ENCODE measurements at regions of chr15 and their contacts with region 1.

Region 1: GRCh38 chr15:73712088-73712487 is 27.9 kb downstream of the CD276 start:
- DNase-seq: no peak

Region 2: DNA sequence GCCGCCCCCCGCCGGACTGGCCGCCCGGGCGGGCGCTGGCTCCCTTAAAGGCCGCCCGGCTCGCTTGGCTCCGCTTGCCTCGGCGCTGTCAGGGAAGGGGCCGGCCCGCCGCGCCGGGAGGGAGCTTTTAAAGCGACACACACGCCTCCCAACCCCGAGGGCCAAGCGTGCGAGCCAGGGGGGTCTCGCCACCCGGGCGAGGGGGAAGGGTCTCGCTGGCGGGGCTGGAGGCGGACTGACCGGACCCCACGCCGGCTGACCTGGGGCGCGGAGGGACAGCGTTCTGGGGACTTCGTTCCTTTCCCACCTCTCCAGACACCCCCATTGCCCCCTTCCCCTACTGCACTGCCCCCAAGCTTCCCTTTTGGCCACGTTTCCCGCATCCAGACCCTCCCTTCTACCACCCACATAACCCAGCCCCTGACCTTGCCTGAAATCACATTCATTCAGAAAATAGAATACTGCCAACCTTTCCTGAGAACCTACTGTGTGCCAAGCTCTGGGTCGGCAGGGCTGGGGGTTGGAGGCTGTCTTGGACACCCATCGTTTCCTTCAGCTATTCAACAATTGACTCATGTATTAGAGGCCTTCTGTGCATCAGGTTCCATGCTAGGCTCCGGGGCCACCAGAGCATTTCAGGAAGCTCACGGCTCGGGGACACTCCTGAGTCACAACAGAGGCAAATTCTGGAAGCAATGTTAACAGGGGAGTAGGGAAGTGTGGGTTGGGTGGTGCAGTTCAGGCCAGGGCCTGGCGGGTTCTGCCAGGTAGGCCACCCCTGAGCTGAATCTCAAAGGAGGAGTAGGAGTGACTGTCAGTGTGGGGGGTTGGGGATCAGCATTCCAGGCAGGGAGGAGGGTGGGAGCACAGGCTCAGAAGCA is 41.4 kb after region 1 on chr15 and contains the start of gene INSYN1:
- intact Hi-C with region 1: no loop called
- DNase-seq: no peak
- total RNA-seq, gene INSYN1: 55.3 TPM

Region 3: DNA sequence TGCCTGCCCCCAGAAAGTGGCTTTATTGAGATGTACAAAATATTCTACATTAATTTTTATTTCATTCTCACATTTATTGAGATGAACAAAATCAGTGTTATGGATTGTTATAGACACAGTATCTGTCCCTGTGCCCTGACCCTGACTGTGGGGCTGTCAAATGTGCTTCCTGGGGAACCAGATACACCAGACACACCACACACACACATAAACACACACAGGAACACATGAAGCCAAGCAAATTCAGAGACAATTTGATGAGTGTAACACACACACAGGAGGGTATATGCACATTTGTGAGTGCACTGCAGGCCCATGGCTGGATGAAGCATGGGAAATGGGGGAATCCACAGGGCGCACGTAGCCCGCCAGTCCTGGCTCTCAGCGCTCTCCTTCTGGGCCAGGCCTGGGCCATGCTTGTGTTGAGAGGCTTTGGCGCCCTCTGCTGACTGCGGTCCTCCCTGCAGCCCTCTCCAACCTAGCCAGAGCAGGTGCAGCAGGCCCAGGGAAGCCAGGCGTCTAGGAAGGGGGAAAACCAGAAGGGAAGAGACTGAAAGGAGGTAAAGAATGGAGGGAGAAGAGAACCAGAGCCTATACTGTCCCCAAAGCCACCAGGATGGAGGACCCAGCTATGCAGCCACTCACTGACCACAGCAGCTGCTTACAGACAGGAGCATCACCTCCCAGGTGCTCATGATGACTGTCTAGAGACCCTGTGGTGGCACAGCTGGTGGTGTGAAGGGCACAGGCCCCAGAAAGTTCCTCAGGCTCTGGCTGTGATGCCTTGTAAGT is 196.1 kb after region 1 on chr15:
- intact Hi-C with region 1: loop called (anchors 5 kb)
- DNase-seq: peak; percentile 91

Measured in cardiac septum (tissue), 1 donor.